Naive thymus-derived CD4-positive, alpha-beta T cell (primary cell): ENCODE measurements at regions of chr18 and their contacts with region 1.

Region 1: GRCh38 chr18:9913526-9914333 is at the start of gene VAPA:
- DNase-seq: peak; percentile 92 to 98 (median 95)
- ATAC-seq: peak; percentile 90
- H3K4me3 ChIP-seq: peak within 1 kb of the TSS; percentile 99
- H3K4me3 Mint-ChIP-seq: peak within 1 kb of the TSS; percentile 89 to 96 (median 93)
- H3K27ac ChIP-seq: peak within 1 kb of the TSS; percentile 98
- H3K27ac Mint-ChIP-seq: peak within 1 kb of the TSS; percentile 85 to 98 (median 96)
- H3K4me1 ChIP-seq: peaks cover 34% of the 10 kb centered on the region in 2 donors
- H3K4me1 Mint-ChIP-seq: peaks cover 18 to 33% (median 28%) of the 10 kb centered on the region in 7 donors
- H3K27me3 ChIP-seq: no peaks in the 10 kb centered on the region
- H3K27me3 Mint-ChIP-seq: peaks cover 0 to 19% (median 0%) of the 10 kb centered on the region in 5 donors
- total RNA-seq, gene VAPA: 109 to 199 (median 151) TPM

Region 2: GRCh38 chr18:8704361-8705279 is 1209.1 kb before region 1 on chr18:
- CTCF ChIA-PET with region 1: no interaction called
- POLR2A ChIA-PET with region 1: no interaction called
- intact Hi-C with region 1: loop called in 1 of 2 experiments (anchors 10 kb)
- DNase-seq: peak; percentile 65 to 92 (median 75)
- ATAC-seq: peak; percentile 96
- H3K4me3 ChIP-seq: peak overlapping the region; percentile 75
- H3K4me3 Mint-ChIP-seq: peak overlapping the region; percentile 83 to 96 (median 90)
- H3K27ac ChIP-seq: peak overlapping the region; percentile 25
- H3K27ac Mint-ChIP-seq: peak overlapping the region in 4 of 9 donors; percentile 4 to 67 (median 48)
- H3K4me1 ChIP-seq: peaks cover 6 to 21% of the 10 kb centered on the region in 2 donors
- H3K4me1 Mint-ChIP-seq: peaks cover 13 to 29% (median 17%) of the 10 kb centered on the region in 7 donors
- H3K27me3 ChIP-seq: peaks cover 5 to 19% of the 10 kb centered on the region in 2 donors
- H3K27me3 Mint-ChIP-seq: peaks cover 60 to 78% (median 68%) of the 10 kb centered on the region in 5 donors

Region 3: GRCh38 chr18:9147440-9148202 is 766.1 kb before region 1 on chr18:
- CTCF ChIA-PET with region 1: no interaction called
- POLR2A ChIA-PET with region 1: no interaction called
- intact Hi-C with region 1: no loop called
- DNase-seq: peak in 7 of 9 donors; percentile 35 to 66 (median 49)
- ATAC-seq: peak; percentile 81
- H3K4me3 ChIP-seq: no peak overlapping the region
- H3K4me3 Mint-ChIP-seq: peak overlapping the region in 9 of 10 donors; percentile 3 to 79 (median 42)
- H3K27ac ChIP-seq: peak overlapping the region; percentile 30
- H3K27ac Mint-ChIP-seq: peak overlapping the region; percentile 21 to 90 (median 66)
- H3K4me1 ChIP-seq: peaks cover 18 to 59% of the 10 kb centered on the region in 2 donors
- H3K4me1 Mint-ChIP-seq: peaks cover 54 to 93% (median 84%) of the 10 kb centered on the region in 7 donors
- H3K27me3 ChIP-seq: no peaks in the 10 kb centered on the region
- H3K27me3 Mint-ChIP-seq: no peaks in the 10 kb centered on the region

Region 4: GRCh38 chr18:9334329-9334972 is 579.3 kb before region 1 on chr18 and contains the start of gene TWSG1:
- CTCF ChIA-PET with region 1: no interaction called
- POLR2A ChIA-PET with region 1: interaction called, 5 read pairs
- intact Hi-C with region 1: loop called (anchors 1 to 2 kb)
- DNase-seq: peak; percentile 86 to 94 (median 90)
- ATAC-seq: peak; percentile 94
- H3K4me3 ChIP-seq: peak within 1 kb of the TSS; percentile 90
- H3K4me3 Mint-ChIP-seq: peak within 1 kb of the TSS; percentile 86 to 94 (median 92)
- H3K27ac ChIP-seq: peak within 1 kb of the TSS; percentile 74
- H3K27ac Mint-ChIP-seq: peak within 1 kb of the TSS; percentile 63 to 97 (median 88)
- H3K4me1 ChIP-seq: peaks cover 0 to 8% of the 10 kb centered on the region in 2 donors
- H3K4me1 Mint-ChIP-seq: peaks cover 1 to 33% (median 24%) of the 10 kb centered on the region in 7 donors
- H3K27me3 ChIP-seq: no peaks in the 10 kb centered on the region
- H3K27me3 Mint-ChIP-seq: peaks cover 0 to 35% (median 0%) of the 10 kb centered on the region in 5 donors
- total RNA-seq, gene TWSG1: 2.4 to 7.6 (median 5.8) TPM

Region 5: DNA sequence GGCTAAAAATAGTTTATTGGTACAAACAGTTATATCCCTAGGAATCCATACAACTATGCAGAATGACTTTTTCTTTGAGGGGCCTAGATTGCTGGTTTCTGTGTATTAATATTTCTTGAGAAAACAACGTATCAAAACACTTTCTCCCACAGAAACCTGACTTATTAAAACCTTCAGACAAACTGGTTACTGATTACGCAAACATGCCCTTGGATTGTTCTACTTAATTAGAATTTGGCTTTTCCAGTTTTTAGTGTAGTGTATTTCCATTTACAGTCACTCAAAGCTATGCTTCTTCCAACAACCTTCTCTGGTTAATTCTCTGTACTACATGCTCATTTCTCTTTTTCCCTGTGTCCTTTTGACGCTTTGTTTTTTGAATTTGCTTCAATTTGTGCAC is 20.1 kb after region 1 on chr18:
- CTCF ChIA-PET with region 1: no interaction called
- POLR2A ChIA-PET with region 1: interaction called, 4 read pairs
- intact Hi-C with region 1: loop called in 1 of 2 experiments (anchors 2 kb)
- DNase-seq: no peak
- ATAC-seq: no peak
- H3K4me3 ChIP-seq: no peak overlapping the region
- H3K4me3 Mint-ChIP-seq: no peak overlapping the region
- H3K27ac ChIP-seq: no peak overlapping the region
- H3K27ac Mint-ChIP-seq: peak overlapping the region in 1 of 9 donors; percentile 51
- H3K4me1 ChIP-seq: peaks cover 7 to 8% of the 10 kb centered on the region in 2 donors
- H3K4me1 Mint-ChIP-seq: peaks cover 16 to 44% (median 34%) of the 10 kb centered on the region in 7 donors
- H3K27me3 ChIP-seq: no peaks in the 10 kb centered on the region
- H3K27me3 Mint-ChIP-seq: no peaks in the 10 kb centered on the region

Region 6: DNA sequence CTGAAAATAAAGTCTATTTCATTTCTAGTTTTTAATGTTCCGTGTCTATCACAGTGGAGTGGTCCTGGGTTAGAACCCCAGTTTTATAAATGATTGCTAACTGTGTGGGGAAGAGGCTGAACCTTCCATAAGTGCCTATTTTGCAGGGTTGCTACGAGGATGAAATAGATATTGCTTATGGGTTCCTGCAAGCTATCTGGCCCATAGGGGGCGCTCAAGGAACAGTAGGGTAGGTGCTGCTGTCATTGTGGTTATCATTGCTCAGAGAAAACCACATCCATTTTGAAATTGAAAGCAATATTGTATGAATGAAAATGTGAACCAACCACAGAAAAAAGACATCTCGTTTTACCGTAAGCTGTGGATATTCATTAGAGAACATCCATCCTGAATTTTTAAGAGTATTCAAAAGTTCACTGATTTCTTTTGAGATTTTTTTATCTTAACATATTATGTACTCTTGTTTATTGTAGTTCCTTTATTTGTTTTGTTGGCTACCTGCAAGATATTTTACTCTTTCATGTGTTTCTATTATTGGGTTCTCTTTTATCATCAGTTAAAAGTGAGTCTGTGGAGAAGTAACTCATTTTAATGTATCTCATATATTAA is 873.7 kb after region 1 on chr18:
- CTCF ChIA-PET with region 1: no interaction called
- POLR2A ChIA-PET with region 1: no interaction called
- intact Hi-C with region 1: loop called in 1 of 2 experiments (anchors 5 kb)
- DNase-seq: peak; percentile 54 to 85 (median 75)
- ATAC-seq: peak; percentile 96
- H3K4me3 ChIP-seq: no peak overlapping the region
- H3K4me3 Mint-ChIP-seq: peak overlapping the region in 4 of 10 donors; percentile 7 to 33 (median 14)
- H3K27ac ChIP-seq: no peak overlapping the region
- H3K27ac Mint-ChIP-seq: peak overlapping the region in 2 of 9 donors; percentile 25 to 64
- H3K4me1 ChIP-seq: no peaks in the 10 kb centered on the region
- H3K4me1 Mint-ChIP-seq: peaks cover 0 to 9% (median 5%) of the 10 kb centered on the region in 7 donors
- H3K27me3 ChIP-seq: no peaks in the 10 kb centered on the region
- H3K27me3 Mint-ChIP-seq: peaks cover 3 to 65% (median 27%) of the 10 kb centered on the region in 5 donors